ENCODE measurements at regions of chr2 and their contacts with region 1.

Region 1: GRCh38 chr2:216108967-216109921 is at the start of gene XRCC5:
- DNase-seq: peak; percentile 96
- ATAC-seq: peak; percentile 89
- H3K4me3 Mint-ChIP-seq: peak within 1 kb of the TSS; percentile 100
- H3K27ac Mint-ChIP-seq: peak within 1 kb of the TSS; percentile 99
- H3K4me1 Mint-ChIP-seq: peaks cover 37% of the 10 kb centered on the region
- H3K27me3 Mint-ChIP-seq: no peaks in the 10 kb centered on the region
- total RNA-seq, gene XRCC5: 268 to 273 TPM

Region 2: GRCh38 chr2:216057688-216058193 is 51.5 kb before region 1 on chr2:
- POLR2A ChIA-PET with region 1: interaction called, 10 read pairs
- DNase-seq: peak; percentile 66
- ATAC-seq: peak; percentile 99
- H3K4me3 Mint-ChIP-seq: peak overlapping the region; percentile 79
- H3K27ac Mint-ChIP-seq: peak overlapping the region; percentile 92
- H3K4me1 Mint-ChIP-seq: peaks cover 31% of the 10 kb centered on the region
- H3K27me3 Mint-ChIP-seq: no peaks in the 10 kb centered on the region

Region 3: GRCh38 chr2:216081487-216082116 is 27.6 kb before region 1 on chr2 and contains the starts of genes PECR and TMEM169:
- POLR2A ChIA-PET with region 1: interaction called, 21 read pairs
- DNase-seq: peak; percentile 85
- ATAC-seq: peak; percentile 92
- H3K4me3 Mint-ChIP-seq: peak within 1 kb of the TSS; percentile 96
- H3K27ac Mint-ChIP-seq: peak within 1 kb of the TSS; percentile 88
- H3K4me1 Mint-ChIP-seq: peaks cover 46% of the 10 kb centered on the region
- H3K27me3 Mint-ChIP-seq: peaks cover 2% of the 10 kb centered on the region
- total RNA-seq, gene PECR: 28.2 to 29.4 TPM
- total RNA-seq, gene TMEM169: 1.1 to 2.0 TPM

Region 4: GRCh38 chr2:216119986-216120385 is 10.7 kb after region 1 on chr2:
- POLR2A ChIA-PET with region 1: interaction called, 19 read pairs
- DNase-seq: no peak
- ATAC-seq: peak; percentile 90
- H3K4me3 Mint-ChIP-seq: peak overlapping the region; percentile 64
- H3K27ac Mint-ChIP-seq: peak overlapping the region; percentile 87
- H3K4me1 Mint-ChIP-seq: peaks cover 66% of the 10 kb centered on the region
- H3K27me3 Mint-ChIP-seq: no peaks in the 10 kb centered on the region

Region 5: GRCh38 chr2:216147172-216148131 is 38.2 kb after region 1 on chr2:
- POLR2A ChIA-PET with region 1: no interaction called
- DNase-seq: no peak
- ATAC-seq: no peak
- H3K4me3 Mint-ChIP-seq: no peak overlapping the region
- H3K27ac Mint-ChIP-seq: peak overlapping the region; percentile 57
- H3K4me1 Mint-ChIP-seq: peaks cover 24% of the 10 kb centered on the region
- H3K27me3 Mint-ChIP-seq: no peaks in the 10 kb centered on the region